ENCODE measurements at regions of chr7 and their contacts with region 1.

Region 1: DNA sequence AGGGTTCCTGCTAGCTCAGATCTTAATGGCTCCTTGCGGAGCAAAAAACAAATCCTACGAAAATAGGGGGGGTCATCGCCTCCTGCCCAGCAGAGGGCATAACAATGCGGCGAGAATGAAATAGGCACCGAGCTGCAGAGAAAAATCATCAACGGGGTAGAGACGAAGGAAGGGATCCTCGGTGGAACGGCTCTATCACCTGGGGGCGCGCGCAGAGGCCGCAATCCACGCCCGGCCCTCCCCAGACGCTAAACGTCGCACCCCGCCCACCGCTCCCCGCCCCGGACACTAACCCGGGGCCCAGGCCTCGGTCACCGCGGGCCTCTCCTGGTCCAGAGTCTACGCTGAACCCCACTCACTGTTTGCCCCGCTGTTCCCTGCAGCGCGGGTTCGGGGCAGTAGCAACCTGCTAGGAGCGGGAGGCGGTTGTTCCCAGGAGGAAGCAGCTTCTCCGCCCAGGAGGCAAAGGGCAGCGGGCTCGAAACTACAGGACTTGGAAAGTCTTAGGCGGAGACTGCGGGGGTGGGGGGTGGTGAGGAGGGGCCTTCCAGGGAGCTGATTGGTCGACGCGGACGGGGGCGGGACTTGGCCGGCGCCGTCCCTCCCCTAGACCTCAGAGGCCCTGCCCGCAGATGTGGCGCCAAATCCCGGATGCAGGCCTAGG is at the start of gene TCAF1:
- DNase-seq: peak; percentile 79 to 81 (median 80)
- H3K4me3 ChIP-seq: peak within 1 kb of the TSS; percentile 69 to 90 (median 72)
- H3K4me3 Mint-ChIP-seq: peak within 1 kb of the TSS; percentile 89 to 96
- H3K27ac ChIP-seq: peak within 1 kb of the TSS; percentile 19 to 75
- H3K27ac Mint-ChIP-seq: peak within 1 kb of the TSS; percentile 67 to 93 (median 82)
- H3K4me1 ChIP-seq: peaks cover 8 to 10% of the 10 kb centered on the region in 2 donors
- H3K4me1 Mint-ChIP-seq: peaks cover 22% of the 10 kb centered on the region
- H3K27me3 ChIP-seq: no peaks in the 10 kb centered on the region
- H3K27me3 Mint-ChIP-seq: peaks cover 3 to 9% (median 5%) of the 10 kb centered on the region in 3 donors
- CTCF ChIP-seq: peak; percentile 27
- polyA plus RNA-seq, gene TCAF1: 1.8 to 3.3 (median 3.0) TPM

Region 2: GRCh38 chr7:143846692-143847091 is 55.1 kb before region 1 on chr7:
- intact Hi-C with region 1: loop called in 1 of 2 experiments (anchors 10 kb)
- DNase-seq: no peak
- H3K4me3 ChIP-seq: no peak overlapping the region
- H3K4me3 Mint-ChIP-seq: no peak overlapping the region
- H3K27ac ChIP-seq: no peak overlapping the region
- H3K27ac Mint-ChIP-seq: no peak overlapping the region
- H3K4me1 ChIP-seq: no peaks in the 10 kb centered on the region
- H3K4me1 Mint-ChIP-seq: no peaks in the 10 kb centered on the region
- H3K27me3 ChIP-seq: no peaks in the 10 kb centered on the region
- H3K27me3 Mint-ChIP-seq: no peaks in the 10 kb centered on the region
- CTCF ChIP-seq: no peak